RWPE1 (cell line): ENCODE measurements at regions of chr15 and their contacts with region 1.

Region 1: DNA sequence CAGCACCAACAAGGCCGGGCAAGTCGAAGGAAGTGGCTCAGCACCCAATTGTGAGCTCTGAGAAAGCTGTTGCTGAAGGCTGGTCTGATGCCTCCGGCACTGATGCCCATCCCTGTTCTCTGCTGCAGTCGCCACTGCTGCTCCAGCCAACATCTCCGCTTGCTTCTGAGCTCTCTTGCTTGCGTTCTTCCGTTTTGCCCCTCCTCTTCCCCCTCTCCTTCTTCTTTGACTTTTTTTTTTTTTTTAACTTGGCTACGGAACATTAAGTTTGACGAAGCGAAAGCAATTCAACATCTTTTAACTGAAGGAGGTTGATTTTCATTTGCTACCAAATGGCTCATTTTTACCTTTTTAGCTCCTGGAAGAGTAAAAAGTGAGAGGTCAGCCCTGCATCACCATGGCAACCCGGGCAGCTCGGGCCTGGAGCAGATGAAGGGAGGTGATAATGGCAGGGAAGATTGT is 443.0 kb downstream of the MCTP2 start:
- DNase-seq: peak; percentile 81
- H3K27ac ChIP-seq: peak overlapping the region; percentile 92
- CTCF ChIP-seq: no peak; the same call in 1 of the 2 replicates

Region 2: DNA sequence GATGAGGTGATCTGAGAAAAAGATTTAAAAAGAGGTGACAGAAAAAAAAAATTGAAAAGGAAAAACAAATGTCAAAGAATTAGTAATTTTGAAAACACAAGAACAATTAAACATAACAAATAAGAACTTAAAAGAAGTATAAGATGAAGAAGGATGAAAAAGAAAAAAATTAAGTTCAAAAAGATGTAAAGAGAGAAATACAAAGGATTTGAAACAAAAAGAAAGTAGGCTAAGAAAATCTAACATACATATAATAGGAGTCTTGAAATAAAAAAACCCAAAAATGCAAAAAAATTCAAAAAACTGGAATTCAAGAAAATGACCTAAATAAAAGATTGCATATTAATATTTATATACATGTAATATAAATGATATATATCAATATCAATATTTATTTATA is 506.2 kb after region 1 on chr15:
- CTCF ChIA-PET with region 1: interaction called, 11 read pairs
- POLR2A ChIA-PET with region 1: no interaction called
- DNase-seq: no peak
- H3K27ac ChIP-seq: no peak overlapping the region
- CTCF ChIP-seq: no peak

Region 3: DNA sequence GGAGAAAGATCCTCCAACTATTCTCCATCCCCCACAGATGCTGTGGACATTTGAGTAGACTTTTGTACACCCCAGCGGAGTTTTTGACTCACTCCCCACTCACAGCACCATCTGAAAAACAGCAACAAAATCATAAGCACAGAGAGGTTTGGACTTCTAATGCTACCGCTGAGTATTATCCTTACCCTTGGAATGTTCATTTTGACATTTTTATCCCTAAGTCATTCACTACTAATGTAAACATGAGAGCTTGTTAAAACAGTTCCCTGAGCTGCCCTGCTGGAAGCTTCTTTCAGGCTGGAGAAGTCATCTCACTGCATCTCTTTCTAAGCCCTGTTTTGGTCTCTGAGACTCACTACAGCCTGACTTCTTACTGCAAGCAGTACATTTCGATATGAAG is 602.9 kb after region 1 on chr15:
- CTCF ChIA-PET with region 1: no interaction called
- POLR2A ChIA-PET with region 1: no interaction called
- DNase-seq: no peak
- H3K27ac ChIP-seq: no peak overlapping the region
- CTCF ChIP-seq: no peak